ENCODE measurements at regions of chr4 and their contacts with region 1.

Region 1: GRCh38 chr4:169619959-169620879 is at the start of gene CLCN3:
- DNase-seq: peak; percentile 99
- H3K4me3 ChIP-seq: peak within 1 kb of the TSS; percentile 77 to 98 (median 83)
- H3K27ac ChIP-seq: peak within 1 kb of the TSS; percentile 99
- H3K4me1 ChIP-seq: peaks cover 13% of the 10 kb centered on the region
- H3K27me3 ChIP-seq: no peaks in the 10 kb centered on the region
- CTCF ChIP-seq: peak in 1 of 2 donors; percentile 16
- total RNA-seq, gene CLCN3: 29.4 to 30.2 TPM

Region 2: DNA sequence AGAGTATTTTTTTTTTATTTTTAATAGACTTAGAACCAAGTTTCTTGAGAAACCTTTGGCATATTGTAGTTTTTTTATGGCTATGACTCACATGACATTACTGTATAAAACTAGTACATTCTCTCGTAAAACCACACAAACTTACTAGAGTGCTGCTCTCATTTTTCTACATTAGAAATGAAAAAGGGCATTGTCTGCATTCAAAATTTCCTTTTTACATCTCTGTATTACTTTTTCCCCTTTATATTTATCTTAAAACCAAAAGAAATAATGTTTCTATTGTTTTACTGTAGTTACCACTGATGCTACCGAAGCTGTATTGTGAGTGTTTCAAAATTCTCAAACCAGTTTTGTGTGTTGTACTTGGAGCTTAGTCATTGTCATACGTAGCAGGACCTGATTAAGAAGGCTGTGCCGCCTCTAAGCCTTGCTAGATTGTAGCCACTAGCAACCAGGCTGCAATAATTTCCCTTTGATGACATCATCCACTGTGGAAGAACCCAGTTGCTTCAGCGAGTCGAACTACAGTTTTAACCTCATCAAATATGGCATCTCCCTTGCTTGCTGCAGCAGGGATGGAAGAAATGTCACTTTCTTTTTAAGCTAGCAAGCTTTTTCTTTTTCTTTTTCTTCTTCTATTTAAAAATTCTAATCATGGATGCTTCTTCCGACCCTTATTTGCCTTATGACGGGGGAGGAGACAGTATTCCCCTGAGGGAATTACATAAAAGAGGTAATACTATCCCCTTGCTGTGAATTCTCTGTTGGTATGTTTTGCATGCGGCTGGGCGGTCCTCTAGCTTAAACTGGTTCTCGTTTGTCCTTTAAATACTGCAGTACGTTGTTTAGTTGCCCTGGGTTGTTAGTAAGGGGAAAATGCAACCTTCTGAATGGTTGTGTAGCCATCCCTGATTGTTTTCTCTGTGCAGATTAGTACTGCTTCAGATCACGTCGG is 39.8 kb after region 1 on chr4:
- CTCF ChIA-PET with region 1: no interaction called
- dilution Hi-C with region 1: no loop called
- in situ Hi-C with region 1: no loop called
- intact Hi-C with region 1: loop called (anchors 1 kb)
- DNase-seq: peak; percentile 98
- H3K4me3 ChIP-seq: peak overlapping the region; percentile 50 to 73 (median 69)
- H3K27ac ChIP-seq: peak overlapping the region; percentile 99
- H3K4me1 ChIP-seq: peaks cover 13% of the 10 kb centered on the region
- H3K27me3 ChIP-seq: no peaks in the 10 kb centered on the region
- CTCF ChIP-seq: no peak

Measured in mammary epithelial cell (primary cell).